Activated T-helper 1 cell treated with anti-CD3 and anti-CD28 coated beads, Interleukin-12 subunit alpha, Interleukin-12 subunit beta, Interleukin-2, Interleukin-4 antibody, amounts not matched to agents 30 ng/mL and 10 ng/mL and 1 ng/mL, durations not matched to agents 14 hours and 24 hours and 36 hours (primary cell): ENCODE measurements at regions of chr1 and their contacts with region 1.

Region 1: GRCh38 chr1:117059678-117060440 is at the start of gene TTF2:
- DNase-seq: peak; percentile 97
- H3K4me3 Mint-ChIP-seq: no peak within 1 kb of the TSS
- H3K27ac Mint-ChIP-seq: no peak within 1 kb of the TSS
- H3K4me1 Mint-ChIP-seq: peaks cover 46% of the 10 kb centered on the region
- H3K27me3 Mint-ChIP-seq: no peaks in the 10 kb centered on the region
- total RNA-seq, gene TTF2: 103 and 114 TPM in 2 replicates

Region 2: GRCh38 chr1:116504308-116505156 is 555.3 kb before region 1 on chr1:
- intact Hi-C with region 1: loop called (anchors 2 kb)
- DNase-seq: peak; percentile 86
- H3K4me3 Mint-ChIP-seq: peak overlapping the region; percentile 3
- H3K27ac Mint-ChIP-seq: peak overlapping the region; percentile 88
- H3K4me1 Mint-ChIP-seq: peaks cover 91% of the 10 kb centered on the region
- H3K27me3 Mint-ChIP-seq: no peaks in the 10 kb centered on the region

Region 3: GRCh38 chr1:116737020-116737854 is 322.6 kb before region 1 on chr1:
- intact Hi-C with region 1: loop called (anchors 1 kb)
- DNase-seq: peak; percentile 70
- H3K4me3 Mint-ChIP-seq: peak overlapping the region; percentile 66
- H3K27ac Mint-ChIP-seq: peak overlapping the region; percentile 99
- H3K4me1 Mint-ChIP-seq: peaks cover 79% of the 10 kb centered on the region
- H3K27me3 Mint-ChIP-seq: no peaks in the 10 kb centered on the region

Region 4: GRCh38 chr1:116817582-116818064 is 242.2 kb before region 1 on chr1:
- intact Hi-C with region 1: loop called (anchors 1 kb)
- DNase-seq: peak; percentile 55
- H3K4me3 Mint-ChIP-seq: peak overlapping the region; percentile 56
- H3K27ac Mint-ChIP-seq: peak overlapping the region; percentile 56
- H3K4me1 Mint-ChIP-seq: peaks cover 59% of the 10 kb centered on the region
- H3K27me3 Mint-ChIP-seq: no peaks in the 10 kb centered on the region

Region 5: GRCh38 chr1:117001254-117001927 is 58.5 kb before region 1 on chr1 and contains the start of gene CD101:
- intact Hi-C with region 1: loop called (anchors 2 kb)
- DNase-seq: no peak
- H3K4me3 Mint-ChIP-seq: peak within 1 kb of the TSS; percentile 3
- H3K27ac Mint-ChIP-seq: peak within 1 kb of the TSS; percentile 79
- H3K4me1 Mint-ChIP-seq: peaks cover 36% of the 10 kb centered on the region
- H3K27me3 Mint-ChIP-seq: peaks cover 3% of the 10 kb centered on the region
- total RNA-seq, gene CD101: 0.80 and 1.0 TPM in 2 replicates

Region 6: DNA sequence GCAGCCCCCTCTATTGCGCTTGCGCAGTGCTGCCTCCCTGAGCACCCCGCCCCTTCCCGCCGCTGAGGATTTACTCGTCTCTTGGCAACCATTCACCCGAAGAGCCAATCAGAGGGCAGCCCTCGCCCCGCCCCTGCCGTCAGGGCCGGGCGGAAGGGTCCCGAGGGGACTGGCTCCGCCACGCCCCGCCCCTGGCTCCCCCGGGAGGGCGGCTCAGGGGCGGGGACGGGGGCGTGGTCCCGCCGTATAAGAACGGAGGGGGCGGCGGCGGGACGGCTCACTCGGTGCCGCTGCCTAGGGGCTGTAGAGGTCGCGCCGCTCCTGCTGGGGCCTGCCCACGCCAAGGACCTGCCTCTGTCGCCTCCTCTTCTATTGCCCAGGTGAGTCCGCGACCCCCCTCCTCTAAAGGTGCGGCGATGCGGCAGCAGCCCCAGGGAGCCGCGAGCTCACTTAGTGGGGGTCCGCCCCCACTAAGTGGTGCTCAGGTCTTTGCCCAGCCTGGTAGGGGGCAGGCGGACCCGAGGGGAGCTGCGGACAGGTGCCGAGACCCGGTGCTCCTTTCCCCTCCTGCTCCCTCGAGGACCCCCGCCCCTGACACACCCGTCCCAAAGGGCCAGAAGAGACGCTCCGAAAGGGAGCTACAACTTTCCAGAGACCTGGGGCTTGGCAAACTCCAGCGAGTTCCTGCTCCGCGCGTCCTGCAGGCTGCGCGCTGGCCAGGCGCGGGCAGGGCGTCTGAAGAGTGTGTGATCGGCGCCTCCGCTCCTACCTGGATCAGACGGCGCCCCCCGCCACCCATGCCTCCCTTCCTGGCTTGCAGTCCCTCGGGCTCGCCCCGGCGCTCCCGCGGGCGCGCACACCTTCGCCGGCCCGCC is 546.2 kb after region 1 on chr1 and contains the start of gene TENT5C:
- intact Hi-C with region 1: loop called (anchors 1 kb)
- DNase-seq: peak; percentile 98
- H3K4me3 Mint-ChIP-seq: peak within 1 kb of the TSS; percentile 91
- H3K27ac Mint-ChIP-seq: peak within 1 kb of the TSS; percentile 80
- H3K4me1 Mint-ChIP-seq: peaks cover 56% of the 10 kb centered on the region
- H3K27me3 Mint-ChIP-seq: peaks cover 26% of the 10 kb centered on the region
- total RNA-seq, gene TENT5C: 4.9 and 5.2 TPM in 2 replicates

Region 7: DNA sequence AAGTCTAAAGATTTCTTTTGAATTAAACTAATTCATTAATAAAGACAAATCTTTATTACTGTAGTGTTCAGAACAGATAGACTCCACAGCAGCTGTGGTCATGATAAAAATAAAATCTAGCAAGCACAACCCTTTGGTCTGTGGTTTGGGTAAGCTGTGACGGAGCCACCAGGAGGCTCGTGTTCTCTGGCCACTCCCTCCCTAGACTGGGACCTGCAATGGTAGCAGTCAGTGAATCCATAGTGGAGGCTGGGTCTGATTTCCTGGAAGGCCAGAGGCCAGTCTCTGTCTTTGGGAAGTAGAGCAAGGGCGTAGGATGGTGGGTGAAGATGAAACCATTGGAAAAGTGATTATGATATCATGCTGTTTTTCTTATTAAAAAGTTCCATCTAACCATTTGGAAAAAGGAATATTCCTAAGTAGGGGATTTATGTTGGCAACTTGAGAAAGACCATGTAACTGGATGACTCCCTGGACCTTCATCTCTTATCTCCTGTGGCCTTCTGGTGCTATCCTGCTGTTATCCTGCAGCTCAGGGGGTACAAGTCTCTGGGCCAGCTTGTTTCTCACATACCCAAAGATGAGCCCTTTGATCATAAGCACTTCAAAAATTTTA is 584.9 kb after region 1 on chr1:
- intact Hi-C with region 1: no loop called
- DNase-seq: no peak
- H3K4me3 Mint-ChIP-seq: no peak overlapping the region
- H3K27ac Mint-ChIP-seq: no peak overlapping the region
- H3K4me1 Mint-ChIP-seq: peaks cover 7% of the 10 kb centered on the region
- H3K27me3 Mint-ChIP-seq: peaks cover 22% of the 10 kb centered on the region